ENCODE measurements at regions of chr3 and their contacts with region 1.

Region 1: GRCh38 chr3:129016356-129016719 is 15.2 kb downstream of the EFCC1 start:
- DNase-seq: peak; percentile 54 to 74 (median 59)
- H3K4me3 ChIP-seq: peak overlapping the region; percentile 41 to 54
- H3K4me3 Mint-ChIP-seq: peak overlapping the region; percentile 54 to 89 (median 83)
- H3K27ac ChIP-seq: peak overlapping the region; percentile 64
- H3K27ac Mint-ChIP-seq: peak overlapping the region; percentile 85 to 99 (median 94)
- H3K4me1 ChIP-seq: peaks cover 36% of the 10 kb centered on the region
- H3K4me1 Mint-ChIP-seq: peaks cover 32 to 54% (median 44%) of the 10 kb centered on the region in 4 donors
- H3K27me3 ChIP-seq: no peaks in the 10 kb centered on the region
- H3K27me3 Mint-ChIP-seq: no peaks in the 10 kb centered on the region

Region 2: GRCh38 chr3:128922804-128923459 is 93.4 kb before region 1 on chr3:
- CTCF ChIA-PET with region 1: interaction called, 5 read pairs
- POLR2A ChIA-PET with region 1: interaction called, 10 read pairs
- intact Hi-C with region 1: no loop called
- DNase-seq: peak; percentile 55 to 64 (median 57)
- H3K4me3 ChIP-seq: peak overlapping the region; percentile 29 to 74
- H3K4me3 Mint-ChIP-seq: peak overlapping the region; percentile 82 to 90 (median 85)
- H3K27ac ChIP-seq: no peak overlapping the region
- H3K27ac Mint-ChIP-seq: peak overlapping the region; percentile 70 to 91 (median 88)
- H3K4me1 ChIP-seq: peaks cover 20% of the 10 kb centered on the region
- H3K4me1 Mint-ChIP-seq: peaks cover 26 to 45% (median 37%) of the 10 kb centered on the region in 4 donors
- H3K27me3 ChIP-seq: no peaks in the 10 kb centered on the region
- H3K27me3 Mint-ChIP-seq: no peaks in the 10 kb centered on the region

Region 3: GRCh38 chr3:128993461-128994173 is 22.7 kb before region 1 on chr3 and contains the start of gene CFAP92:
- CTCF ChIA-PET with region 1: interaction called, 59 read pairs
- POLR2A ChIA-PET with region 1: interaction called, 30 read pairs
- intact Hi-C with region 1: loop called (anchors 1 kb)
- DNase-seq: peak; percentile 89 to 92 (median 91)
- H3K4me3 ChIP-seq: peak within 1 kb of the TSS in 1 of 2 donors; percentile 42
- H3K4me3 Mint-ChIP-seq: peak within 1 kb of the TSS; percentile 68 to 85 (median 78)
- H3K27ac ChIP-seq: peak within 1 kb of the TSS; percentile 40
- H3K27ac Mint-ChIP-seq: peak within 1 kb of the TSS; percentile 30 to 91 (median 83)
- H3K4me1 ChIP-seq: peaks cover 14% of the 10 kb centered on the region
- H3K4me1 Mint-ChIP-seq: peaks cover 5 to 28% (median 16%) of the 10 kb centered on the region in 4 donors
- H3K27me3 ChIP-seq: no peaks in the 10 kb centered on the region
- H3K27me3 Mint-ChIP-seq: no peaks in the 10 kb centered on the region
- total RNA-seq, gene CFAP92: 0.38 TPM in 1 of 2 experiments, not detected in the other

Region 4: DNA sequence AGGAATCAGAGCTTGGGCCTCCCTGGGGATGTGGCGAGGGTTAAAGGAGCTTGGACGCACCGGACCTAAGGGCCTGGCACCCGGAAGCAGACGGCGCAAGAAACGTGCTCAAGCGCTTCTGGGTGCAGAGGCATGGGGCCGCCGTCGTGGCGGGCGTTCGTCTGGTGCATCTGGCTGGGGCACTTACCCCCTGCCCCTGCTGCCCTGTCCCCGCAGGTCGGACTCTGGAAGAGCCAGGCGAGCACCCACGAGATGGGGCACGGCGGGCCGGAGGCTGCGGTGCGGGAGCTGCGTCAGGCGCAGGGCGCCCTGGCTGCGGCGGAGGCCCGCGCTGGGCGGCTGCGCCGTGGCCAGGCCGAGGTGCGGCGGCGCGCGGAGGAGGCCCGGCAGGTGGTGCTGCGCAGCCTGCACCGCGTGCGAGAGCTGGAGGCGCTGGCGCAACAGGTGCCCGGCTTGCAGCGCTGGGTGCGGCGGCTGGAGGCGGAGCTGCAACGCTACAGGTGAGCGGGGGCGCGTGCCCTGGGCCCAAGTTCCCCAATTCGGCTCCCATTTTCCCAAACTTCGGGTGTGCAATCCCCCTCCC is 12.7 kb before region 1 on chr3:
- CTCF ChIA-PET with region 1: interaction called, 148 read pairs
- POLR2A ChIA-PET with region 1: interaction called, 110 read pairs
- intact Hi-C with region 1: loop called (anchors 1 kb)
- DNase-seq: peak; percentile 50 to 64 (median 57)
- H3K4me3 ChIP-seq: no peak overlapping the region
- H3K4me3 Mint-ChIP-seq: peak overlapping the region in 4 of 8 donors; percentile 59 to 73 (median 64)
- H3K27ac ChIP-seq: no peak overlapping the region
- H3K27ac Mint-ChIP-seq: peak overlapping the region in 1 of 7 donors; percentile 47
- H3K4me1 ChIP-seq: peaks cover 36% of the 10 kb centered on the region
- H3K4me1 Mint-ChIP-seq: peaks cover 20 to 47% (median 32%) of the 10 kb centered on the region in 4 donors
- H3K27me3 ChIP-seq: peaks cover 25% of the 10 kb centered on the region
- H3K27me3 Mint-ChIP-seq: peaks cover 22 to 27% of the 10 kb centered on the region in 2 donors

Region 5: DNA sequence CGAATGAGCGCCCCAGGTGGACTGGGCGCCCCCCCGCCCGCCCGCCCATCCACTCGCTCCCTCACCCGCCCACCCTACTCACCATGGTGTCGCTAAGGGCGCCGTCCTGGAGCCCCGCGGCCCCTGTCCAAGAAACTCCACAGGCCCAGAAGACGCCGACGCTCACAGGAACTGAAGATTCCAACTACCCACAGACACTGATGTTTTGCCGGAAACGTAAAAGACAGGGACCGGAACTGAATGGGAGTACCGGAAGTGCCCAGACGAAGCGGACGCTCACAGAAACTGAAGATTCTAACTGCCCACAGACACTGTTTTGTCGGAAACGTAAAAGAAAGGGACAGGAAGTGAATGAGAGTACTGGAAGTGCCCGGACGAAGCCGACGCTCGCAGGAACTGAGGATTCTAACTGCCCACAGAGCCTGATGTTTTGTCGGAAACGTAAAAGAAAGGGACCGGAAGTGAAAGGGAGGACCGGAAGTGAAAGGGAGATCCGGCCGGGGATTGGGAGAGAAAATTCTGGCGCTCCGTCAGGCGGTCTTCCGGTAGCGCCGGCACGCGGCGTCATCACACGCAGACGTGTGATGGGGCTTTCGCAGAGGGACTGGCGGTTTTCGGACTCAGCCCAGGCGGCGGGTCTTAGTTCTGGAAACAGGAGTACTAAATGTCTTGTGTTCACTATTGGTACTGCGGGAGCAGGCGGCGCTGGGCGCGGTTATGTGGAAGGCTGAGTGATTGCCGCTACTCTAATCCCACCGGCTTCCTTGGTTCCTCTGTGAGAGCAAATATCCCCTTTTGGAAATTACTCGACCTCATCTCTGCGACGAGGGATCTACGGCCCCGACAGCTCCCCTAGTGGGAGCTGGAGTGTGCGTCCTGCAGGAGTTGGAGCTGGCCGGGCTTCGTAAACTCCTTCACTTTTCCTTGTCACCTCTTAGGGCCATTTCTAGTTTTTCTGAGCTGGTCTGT is 144.8 kb after region 1 on chr3 and contains the start of gene ISY1:
- CTCF ChIA-PET with region 1: interaction called, 18 read pairs
- POLR2A ChIA-PET with region 1: interaction called, 10 read pairs
- intact Hi-C with region 1: no loop called
- DNase-seq: peak; percentile 90 to 93 (median 92)
- H3K4me3 ChIP-seq: peak within 1 kb of the TSS; percentile 75 to 94
- H3K4me3 Mint-ChIP-seq: peak within 1 kb of the TSS; percentile 96 to 100 (median 97)
- H3K27ac ChIP-seq: peak within 1 kb of the TSS; percentile 97
- H3K27ac Mint-ChIP-seq: peak within 1 kb of the TSS; percentile 98 to 100 (median 99)
- H3K4me1 ChIP-seq: peaks cover 23% of the 10 kb centered on the region
- H3K4me1 Mint-ChIP-seq: peaks cover 24 to 59% (median 37%) of the 10 kb centered on the region in 4 donors
- H3K27me3 ChIP-seq: no peaks in the 10 kb centered on the region
- H3K27me3 Mint-ChIP-seq: no peaks in the 10 kb centered on the region
- total RNA-seq, gene ISY1: 29.5 to 34.3 TPM

Region 6: DNA sequence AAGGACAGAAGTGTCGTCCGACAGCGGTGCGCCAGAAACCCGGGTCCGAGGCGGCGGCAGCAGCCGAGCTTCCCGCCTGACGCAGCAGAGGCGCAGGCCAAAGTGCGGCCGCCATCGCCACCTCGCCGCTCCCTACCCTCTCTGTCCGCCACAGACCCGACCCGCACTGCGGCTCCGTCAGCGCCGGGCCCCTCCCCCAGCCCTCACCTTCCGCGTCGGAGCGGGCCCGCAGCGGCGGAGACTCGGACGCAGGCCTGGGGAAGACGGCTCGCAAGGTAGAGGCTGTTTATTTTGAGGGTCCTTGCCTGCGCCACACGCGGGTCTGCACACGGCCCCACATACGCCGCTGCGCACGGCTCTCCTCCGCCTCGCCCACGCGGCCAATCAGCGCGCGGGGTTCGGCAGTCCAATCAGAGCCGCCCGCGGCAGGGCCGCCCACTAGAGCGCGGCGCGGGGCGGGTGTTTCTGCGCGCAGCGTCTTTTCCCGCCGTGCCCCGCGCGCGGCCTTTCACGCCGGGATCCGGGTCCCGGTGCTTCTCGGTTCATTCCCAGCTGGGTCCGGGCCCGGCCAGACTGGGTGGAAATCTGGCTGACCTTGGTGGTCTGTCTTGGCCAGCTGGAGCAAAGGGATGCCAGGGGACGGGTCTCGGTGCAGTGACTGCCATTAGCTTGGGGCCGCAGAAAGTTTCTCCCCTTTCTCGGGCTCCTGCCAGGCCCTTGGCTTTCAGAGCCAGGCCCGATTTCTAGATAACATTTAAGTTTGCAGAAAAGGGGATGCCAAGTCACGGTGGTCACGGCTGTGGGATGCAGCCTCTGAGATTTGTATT is 167.4 kb after region 1 on chr3 and contains the start of gene CNBP:
- CTCF ChIA-PET with region 1: interaction called, 6 read pairs
- POLR2A ChIA-PET with region 1: interaction called, 26 read pairs
- intact Hi-C with region 1: no loop called
- DNase-seq: peak; percentile 90 to 95 (median 93)
- H3K4me3 ChIP-seq: peak within 1 kb of the TSS; percentile 51 to 93
- H3K4me3 Mint-ChIP-seq: peak within 1 kb of the TSS; percentile 89 to 99 (median 97)
- H3K27ac ChIP-seq: peak within 1 kb of the TSS; percentile 99
- H3K27ac Mint-ChIP-seq: peak within 1 kb of the TSS; percentile 91 to 99 (median 98)
- H3K4me1 ChIP-seq: peaks cover 41% of the 10 kb centered on the region
- H3K4me1 Mint-ChIP-seq: peaks cover 20 to 55% (median 31%) of the 10 kb centered on the region in 4 donors
- H3K27me3 ChIP-seq: no peaks in the 10 kb centered on the region
- H3K27me3 Mint-ChIP-seq: no peaks in the 10 kb centered on the region
- total RNA-seq, gene CNBP: 369 to 400 TPM

Measured in CD4-positive, alpha-beta memory T cell (primary cell).